ENCODE measurements at regions of chr12 and their contacts with region 1.

Region 1: GRCh38 chr12:40107098-40107802 is 1.4 kb upstream of the SLC2A13 start:
- DNase-seq: peak; percentile 93
- H3K4me3 ChIP-seq: peak overlapping the region in 3 of 4 donors; percentile 26 to 52 (median 31)
- H3K27ac ChIP-seq: peak overlapping the region; percentile 91 to 97 (median 94)
- H3K4me1 ChIP-seq: peaks cover 0 to 41% (median 28%) of the 10 kb centered on the region in 4 donors
- H3K27me3 ChIP-seq: no peaks in the 10 kb centered on the region
- CTCF ChIP-seq: peak; percentile 89 to 95 (median 93)
- EP300 ChIP-seq: no peak
- POLR2A ChIP-seq: no peak

Region 2: GRCh38 chr12:40078266-40078665 is 29.0 kb before region 1 on chr12:
- in situ Hi-C with region 1: no loop called
- intact Hi-C with region 1: loop called (anchors 1 kb)
- DNase-seq: no peak
- H3K4me3 ChIP-seq: no peak overlapping the region
- H3K27ac ChIP-seq: no peak overlapping the region
- H3K4me1 ChIP-seq: no peaks in the 10 kb centered on the region
- H3K27me3 ChIP-seq: no peaks in the 10 kb centered on the region
- CTCF ChIP-seq: no peak
- EP300 ChIP-seq: no peak
- POLR2A ChIP-seq: no peak